Adrenal gland (tissue), 19 donors: ENCODE measurements at regions of chr11 and their contacts with region 1.

Region 1: GRCh38 chr11:1546536-1547400 is 25.3 kb downstream of the DUSP8 start:
- DNase-seq: peak in 5 of 7 donors; percentile 53 to 62 (median 54)
- H3K4me3 ChIP-seq: peak overlapping the region in 1 of 4 donors; percentile 48
- H3K27ac ChIP-seq: no peak overlapping the region
- H3K4me1 ChIP-seq: peaks cover 3 to 23% of the 10 kb centered on the region in 2 donors
- H3K27me3 ChIP-seq: peaks cover 26% of the 10 kb centered on the region
- CTCF ChIP-seq: peak; percentile 27 to 85 (median 66)
- POLR2A ChIP-seq: no peak

Region 2: GRCh38 chr11:1574238-1574932 is 27.6 kb after region 1 on chr11:
- intact Hi-C with region 1: loop called (anchors 2 kb)
- DNase-seq: peak in 5 of 7 donors; percentile 50 to 71 (median 63)
- H3K4me3 ChIP-seq: no peak overlapping the region
- H3K27ac ChIP-seq: peak overlapping the region in 1 of 5 donors; percentile 75
- H3K4me1 ChIP-seq: peaks cover 0 to 5% of the 10 kb centered on the region in 2 donors
- H3K27me3 ChIP-seq: peaks cover 18% of the 10 kb centered on the region
- CTCF ChIP-seq: peak in 3 of 6 experiments; percentile 90 to 95 (median 91)
- POLR2A ChIP-seq: no peak

Region 3: GRCh38 chr11:1628506-1629325 is 81.9 kb after region 1 on chr11:
- intact Hi-C with region 1: loop called in 1 of 2 experiments (anchors 5 kb)
- DNase-seq: peak; percentile 29 to 67 (median 54)
- H3K4me3 ChIP-seq: no peak overlapping the region
- H3K27ac ChIP-seq: no peak overlapping the region
- H3K4me1 ChIP-seq: no peaks in the 10 kb centered on the region
- H3K27me3 ChIP-seq: peaks cover 20% of the 10 kb centered on the region
- CTCF ChIP-seq: peak; percentile 62 to 89 (median 70)
- POLR2A ChIP-seq: no peak